OCI-LY7 (cell line): ENCODE measurements at regions of chr4 and their contacts with region 1.

Region 1: DNA sequence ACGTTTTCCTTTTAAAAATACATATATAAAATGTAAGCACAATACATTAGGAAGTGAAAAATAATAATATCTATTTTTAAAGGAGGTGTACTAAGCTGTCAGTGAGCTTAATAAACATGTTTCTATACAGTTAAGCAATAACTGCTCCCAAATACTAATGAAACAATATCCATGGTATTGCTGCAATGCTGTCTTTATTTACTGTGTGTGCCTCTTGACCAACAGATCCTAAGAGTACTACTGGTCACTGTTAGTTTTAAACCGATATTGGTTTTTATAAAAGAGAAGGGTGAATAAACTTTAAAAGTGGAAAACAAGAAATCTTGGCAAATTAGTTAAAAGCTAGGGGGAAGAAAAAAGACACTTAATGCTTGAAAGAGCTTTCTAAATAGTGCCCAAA is 1029.0 kb downstream of the FSTL5 start:
- DNase-seq: no peak
- H3K4me3 ChIP-seq: no peak overlapping the region
- H3K27ac ChIP-seq: no peak overlapping the region
- H3K4me1 ChIP-seq: no peaks in the 10 kb centered on the region
- CTCF ChIP-seq: no peak

Region 2: DNA sequence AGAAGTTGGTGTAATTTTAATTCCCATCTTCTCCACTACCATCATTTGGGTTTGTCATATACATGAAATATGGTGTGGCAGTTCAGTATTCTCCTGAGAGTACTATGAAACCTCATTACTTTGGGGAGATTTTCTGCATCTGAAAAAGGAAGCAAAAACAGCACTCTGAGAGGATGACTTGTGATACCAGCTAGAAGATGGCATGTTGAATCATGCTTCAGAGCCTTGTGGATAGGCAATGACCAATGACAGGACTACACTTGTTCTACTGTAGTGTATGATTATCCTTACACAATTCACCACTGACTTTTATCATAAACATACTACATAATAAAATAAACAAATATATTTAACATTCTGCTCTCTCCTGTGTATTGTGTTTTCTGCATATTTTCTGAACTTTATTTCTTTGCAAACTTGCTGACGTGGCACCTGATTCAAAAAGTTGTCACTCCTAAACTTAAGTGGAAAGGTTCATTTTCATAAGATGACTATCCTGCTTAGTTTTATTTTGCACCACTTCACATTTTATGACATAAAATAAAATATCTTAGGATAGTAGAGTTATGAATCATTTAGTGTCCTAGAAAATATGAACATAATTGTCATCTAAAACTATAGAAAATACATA is 37.7 kb after region 1 on chr4:
- CTCF ChIA-PET with region 1: no interaction called
- POLR2A ChIA-PET with region 1: no interaction called
- intact Hi-C with region 1: loop called (anchors 5 kb)
- DNase-seq: no peak
- H3K4me3 ChIP-seq: no peak overlapping the region
- H3K27ac ChIP-seq: no peak overlapping the region
- H3K4me1 ChIP-seq: no peaks in the 10 kb centered on the region
- CTCF ChIP-seq: no peak